ENCODE measurements at regions of chr17 and their contacts with region 1.

Region 1: DNA sequence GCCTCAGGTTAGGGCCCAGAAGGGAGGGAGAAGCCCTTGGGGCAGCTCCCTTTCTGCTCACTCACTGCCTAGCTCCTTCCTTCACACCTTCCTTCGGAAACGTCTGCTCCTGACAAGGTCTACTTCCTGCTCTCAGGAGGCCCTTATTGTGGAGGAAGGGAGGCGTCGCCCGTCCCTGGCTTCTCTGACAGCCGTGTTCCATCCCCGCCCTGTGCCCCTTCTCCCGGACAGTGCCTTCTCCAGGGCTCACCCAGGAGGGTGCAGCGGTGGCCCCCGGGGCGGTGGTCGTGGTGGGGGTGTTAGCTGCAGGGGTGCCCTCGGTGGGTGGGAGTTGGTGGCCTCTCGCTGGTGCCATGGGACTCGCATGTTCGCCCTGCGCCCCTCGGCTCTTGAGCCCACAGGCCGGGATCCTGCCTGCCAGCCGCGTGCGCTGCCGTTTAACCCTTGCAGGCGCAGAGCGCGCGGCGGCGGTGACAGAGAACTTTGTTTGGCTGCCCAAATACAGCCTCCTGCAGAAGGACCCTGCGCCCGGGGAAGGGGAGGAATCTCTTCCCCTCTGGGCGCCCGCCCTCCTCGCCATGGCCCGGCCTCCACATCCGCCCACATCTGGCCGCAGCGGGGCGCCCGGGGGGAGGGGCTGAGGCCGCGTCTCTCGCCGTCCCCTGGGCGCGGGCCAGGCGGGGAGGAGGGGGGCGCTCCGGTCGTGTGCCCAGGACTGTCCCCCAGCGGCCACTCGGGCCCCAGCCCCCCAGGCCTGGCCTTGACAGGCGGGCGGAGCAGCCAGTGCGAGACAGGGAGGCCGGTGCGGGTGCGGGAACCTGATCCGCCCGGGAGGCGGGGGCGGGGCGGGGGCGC is 231.9 kb downstream of the SEC14L1 start:
- DNase-seq: peak; percentile 83
- ATAC-seq: peak; percentile 49
- H3K4me3 Mint-ChIP-seq: peak overlapping the region; percentile 79
- H3K27ac Mint-ChIP-seq: peak overlapping the region; percentile 88
- H3K4me1 Mint-ChIP-seq: peaks cover 56% of the 10 kb centered on the region
- H3K27me3 Mint-ChIP-seq: peaks cover 4% of the 10 kb centered on the region

Region 2: GRCh38 chr17:77227461-77228237 is 145.0 kb before region 1 on chr17:
- CTCF ChIA-PET with region 1: no interaction called
- POLR2A ChIA-PET with region 1: no interaction called
- DNase-seq: no peak
- ATAC-seq: no peak
- H3K4me3 Mint-ChIP-seq: no peak overlapping the region
- H3K27ac Mint-ChIP-seq: no peak overlapping the region
- H3K4me1 Mint-ChIP-seq: no peaks in the 10 kb centered on the region
- H3K27me3 Mint-ChIP-seq: no peaks in the 10 kb centered on the region

Region 3: DNA sequence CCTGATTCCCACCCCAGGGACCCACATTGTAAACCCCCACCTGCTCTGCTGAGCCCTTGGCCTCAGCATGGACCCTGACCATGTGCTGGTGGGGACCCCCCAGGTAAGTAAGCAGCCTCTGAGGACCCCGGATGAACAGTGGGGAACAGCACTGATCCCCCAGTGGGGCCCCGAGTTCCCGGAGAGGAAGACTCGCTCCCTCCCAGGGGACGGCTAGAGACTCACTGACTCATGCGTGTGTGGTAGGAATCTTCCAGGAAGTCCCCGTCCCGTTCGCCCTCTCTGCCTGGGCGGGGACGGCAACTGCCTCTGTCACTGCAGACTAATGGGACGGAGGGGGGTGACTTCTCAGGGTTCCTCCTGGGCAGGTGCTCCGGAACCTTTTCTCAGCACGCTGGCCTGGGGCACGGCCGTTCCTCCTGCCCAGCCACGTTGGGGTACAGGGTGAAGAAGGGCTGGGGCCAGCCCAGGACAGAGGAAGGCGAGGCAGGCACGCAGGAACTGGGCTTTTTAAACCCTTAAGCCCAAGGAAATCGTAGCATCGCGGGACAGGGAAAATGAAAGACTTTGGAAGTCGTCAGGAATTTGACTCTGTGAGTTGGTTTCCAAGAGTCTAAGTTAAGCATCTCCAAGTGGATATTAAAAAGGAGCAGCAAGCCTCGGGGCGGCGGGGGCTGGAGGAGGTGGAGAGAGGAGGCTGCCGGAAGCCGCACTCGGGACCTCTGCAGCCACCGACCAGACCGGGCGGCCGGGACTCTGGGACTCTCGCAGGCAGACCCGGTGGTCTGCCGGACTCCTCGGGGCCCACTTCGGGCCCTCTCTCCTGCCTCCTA is 53.2 kb before region 1 on chr17:
- CTCF ChIA-PET with region 1: no interaction called
- POLR2A ChIA-PET with region 1: no interaction called
- DNase-seq: peak; percentile 53
- ATAC-seq: peak; percentile 68
- H3K4me3 Mint-ChIP-seq: peak overlapping the region; percentile 61
- H3K27ac Mint-ChIP-seq: peak overlapping the region; percentile 67
- H3K4me1 Mint-ChIP-seq: peaks cover 30% of the 10 kb centered on the region
- H3K27me3 Mint-ChIP-seq: peaks cover 2% of the 10 kb centered on the region

Region 4: GRCh38 chr17:77358801-77359200 is 13.9 kb before region 1 on chr17:
- CTCF ChIA-PET with region 1: interaction called, 11 read pairs
- POLR2A ChIA-PET with region 1: interaction called, 6 read pairs
- DNase-seq: no peak
- ATAC-seq: no peak
- H3K4me3 Mint-ChIP-seq: no peak overlapping the region
- H3K27ac Mint-ChIP-seq: no peak overlapping the region
- H3K4me1 Mint-ChIP-seq: peaks cover 11% of the 10 kb centered on the region
- H3K27me3 Mint-ChIP-seq: no peaks in the 10 kb centered on the region

Region 5: GRCh38 chr17:77391668-77392375 is 19.2 kb after region 1 on chr17:
- CTCF ChIA-PET with region 1: interaction called, 57 read pairs
- POLR2A ChIA-PET with region 1: interaction called, 54 read pairs
- DNase-seq: peak; percentile 84
- ATAC-seq: peak; percentile 54
- H3K4me3 Mint-ChIP-seq: peak overlapping the region; percentile 84
- H3K27ac Mint-ChIP-seq: peak overlapping the region; percentile 92
- H3K4me1 Mint-ChIP-seq: peaks cover 89% of the 10 kb centered on the region
- H3K27me3 Mint-ChIP-seq: no peaks in the 10 kb centered on the region